Naive thymus-derived CD8-positive, alpha-beta T cell (primary cell): ENCODE measurements at regions of chr12 and their contacts with region 1.

Region 1: DNA sequence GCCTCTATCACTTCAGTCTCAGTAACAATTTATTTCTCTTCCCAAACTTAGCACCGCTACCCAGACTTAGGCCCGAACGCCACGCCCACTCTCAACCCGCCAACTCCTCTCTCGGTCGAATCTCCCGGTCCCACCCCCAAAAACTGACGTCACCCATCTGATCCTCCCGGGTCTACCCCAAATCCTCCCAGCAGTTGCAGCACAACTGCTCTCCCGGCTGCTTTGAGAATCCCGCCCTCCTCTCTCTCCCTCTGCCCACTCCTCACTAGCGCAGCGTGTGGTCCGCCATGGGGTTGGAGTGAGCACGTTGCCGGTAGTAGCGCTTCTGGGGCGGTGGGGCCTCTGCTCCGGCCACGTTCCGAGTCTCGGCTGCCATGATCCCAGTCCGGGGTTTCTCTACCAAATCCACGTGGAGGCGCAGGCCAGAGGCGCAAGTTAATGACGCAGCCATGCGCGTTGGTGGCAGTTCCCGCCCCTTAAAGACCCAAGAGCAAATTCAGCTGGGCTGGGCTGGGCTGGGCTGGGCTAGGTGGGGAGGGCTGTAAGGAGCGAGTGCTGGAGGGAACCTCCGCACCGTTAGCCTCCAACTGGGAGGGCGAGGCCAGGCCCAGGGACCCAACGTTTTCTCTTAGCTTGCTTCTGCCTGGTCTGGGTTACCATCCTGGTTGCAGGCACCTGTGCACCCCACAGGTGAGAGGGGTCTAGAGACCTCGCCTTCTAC is at the start of gene METTL1:
- DNase-seq: peak; percentile 74 to 93 (median 87)
- ATAC-seq: peak; percentile 88
- H3K4me3 Mint-ChIP-seq: peak within 1 kb of the TSS; percentile 94 to 99 (median 98)
- H3K27ac Mint-ChIP-seq: peak within 1 kb of the TSS; percentile 86 to 99 (median 98)
- H3K4me1 Mint-ChIP-seq: peaks cover 17 to 32% (median 22%) of the 10 kb centered on the region in 4 donors
- H3K27me3 Mint-ChIP-seq: peaks cover 0 to 1% (median 0%) of the 10 kb centered on the region in 5 donors
- polyA plus RNA-seq, gene METTL1: 12.9 to 21.7 (median 18.7) TPM

Region 2: GRCh38 chr12:57698414-57698813 is 73.5 kb before region 1 on chr12:
- POLR2A ChIA-PET with region 1: no interaction called
- DNase-seq: no peak
- ATAC-seq: no peak
- H3K4me3 Mint-ChIP-seq: no peak overlapping the region
- H3K27ac Mint-ChIP-seq: peak overlapping the region in 1 of 10 donors; percentile 7
- H3K4me1 Mint-ChIP-seq: peaks cover 10 to 34% (median 17%) of the 10 kb centered on the region in 4 donors
- H3K27me3 Mint-ChIP-seq: no peaks in the 10 kb centered on the region

Region 3: DNA sequence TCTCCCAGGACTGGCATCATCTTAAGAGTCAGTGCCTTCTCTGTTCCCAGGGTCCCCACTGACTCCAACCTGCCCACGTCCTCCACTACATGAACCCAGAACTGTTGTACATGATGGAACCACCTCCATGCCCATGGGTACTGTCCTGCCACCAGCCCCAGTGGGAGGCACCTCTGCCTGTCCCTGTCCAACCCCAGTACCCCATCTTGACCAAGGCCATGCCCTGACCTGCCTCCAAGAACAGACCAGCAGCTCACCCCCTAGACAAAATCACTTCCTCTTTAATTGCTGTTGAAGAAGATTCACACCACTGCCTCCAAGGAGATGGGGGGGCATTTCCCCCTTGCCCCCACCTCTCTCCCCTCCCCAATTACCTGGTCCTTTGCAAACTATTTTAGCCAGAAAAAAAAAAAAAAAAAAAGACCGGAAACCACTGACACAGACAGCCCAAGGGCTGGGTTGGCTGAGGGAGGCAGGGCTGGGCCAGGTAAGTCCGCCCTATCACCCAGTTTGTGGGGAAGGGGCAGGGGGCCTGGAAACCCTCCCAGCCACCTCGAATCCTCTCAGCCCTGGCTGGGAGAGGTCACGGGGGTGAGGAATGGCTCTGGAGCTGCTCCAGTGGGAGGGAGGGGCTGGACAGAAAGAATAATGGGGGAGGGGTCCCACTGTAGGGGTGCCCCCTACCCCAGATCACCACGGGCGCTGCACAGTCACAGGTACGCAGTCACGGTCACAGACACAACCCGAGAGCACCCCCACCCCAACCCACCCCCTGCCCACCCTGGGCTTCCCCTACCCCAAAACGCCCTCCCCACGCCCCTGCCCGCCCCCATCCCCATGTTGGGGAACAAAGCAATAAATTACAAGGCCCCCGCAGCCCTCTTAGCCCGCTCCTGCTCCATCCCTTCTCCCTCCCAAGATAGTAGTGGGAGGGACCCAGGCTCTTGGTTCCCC is 46.7 kb before region 1 on chr12:
- POLR2A ChIA-PET with region 1: no interaction called
- DNase-seq: no peak
- ATAC-seq: no peak
- H3K4me3 Mint-ChIP-seq: peak overlapping the region in 1 of 10 donors; percentile 20
- H3K27ac Mint-ChIP-seq: peak overlapping the region in 9 of 10 donors; percentile 11 to 91 (median 67)
- H3K4me1 Mint-ChIP-seq: peaks cover 16 to 44% (median 33%) of the 10 kb centered on the region in 4 donors
- H3K27me3 Mint-ChIP-seq: no peaks in the 10 kb centered on the region

Region 4: GRCh38 chr12:57735952-57736740 is 35.7 kb before region 1 on chr12:
- POLR2A ChIA-PET with region 1: no interaction called
- DNase-seq: no peak
- ATAC-seq: no peak
- H3K4me3 Mint-ChIP-seq: no peak overlapping the region
- H3K27ac Mint-ChIP-seq: peak overlapping the region; percentile 10 to 91 (median 80)
- H3K4me1 Mint-ChIP-seq: peaks cover 27 to 52% (median 36%) of the 10 kb centered on the region in 4 donors
- H3K27me3 Mint-ChIP-seq: no peaks in the 10 kb centered on the region

Region 5: GRCh38 chr12:57782608-57783465 is 11.0 kb after region 1 on chr12 and contains the start of gene TSFM:
- POLR2A ChIA-PET with region 1: interaction called, 20 read pairs
- DNase-seq: peak; percentile 89 to 98 (median 96)
- ATAC-seq: peak; percentile 87 to 92
- H3K4me3 Mint-ChIP-seq: peak within 1 kb of the TSS; percentile 99 to 100 (median 99)
- H3K27ac Mint-ChIP-seq: peak within 1 kb of the TSS; percentile 97 to 100 (median 99)
- H3K4me1 Mint-ChIP-seq: peaks cover 30 to 55% (median 48%) of the 10 kb centered on the region in 4 donors
- H3K27me3 Mint-ChIP-seq: peaks cover 0 to 4% (median 0%) of the 10 kb centered on the region in 5 donors
- polyA plus RNA-seq, gene TSFM: 25.5 to 31.0 (median 28.3) TPM

Region 6: DNA sequence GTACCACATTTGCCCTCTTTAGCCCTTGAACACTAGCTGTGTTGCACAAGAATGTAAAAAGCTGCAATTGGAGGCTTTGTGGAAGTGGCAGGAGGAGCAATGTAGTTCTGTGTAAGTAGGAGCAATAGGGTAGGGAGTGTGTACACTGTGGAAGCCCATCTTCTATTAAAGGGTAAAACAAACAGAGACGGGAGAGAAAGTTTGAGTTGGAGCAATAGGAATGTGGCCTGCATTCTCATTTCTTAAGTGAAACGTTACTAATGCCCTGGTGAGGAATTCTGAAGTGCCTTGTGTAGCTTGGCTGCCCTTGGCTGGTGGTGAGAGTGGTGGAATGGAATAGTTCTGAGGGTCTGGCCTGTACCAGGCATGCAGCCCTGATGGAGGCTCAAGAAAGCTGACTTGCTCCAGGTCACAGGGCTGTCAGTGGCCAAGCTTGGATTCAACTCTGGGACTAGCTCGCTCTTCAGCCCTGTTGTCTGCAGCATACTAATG is 130.7 kb after region 1 on chr12:
- POLR2A ChIA-PET with region 1: no interaction called
- DNase-seq: no peak
- ATAC-seq: no peak
- H3K4me3 Mint-ChIP-seq: no peak overlapping the region
- H3K27ac Mint-ChIP-seq: peak overlapping the region in 3 of 10 donors; percentile 4 to 73 (median 4)
- H3K4me1 Mint-ChIP-seq: peaks cover 17 to 29% (median 27%) of the 10 kb centered on the region in 4 donors
- H3K27me3 Mint-ChIP-seq: peaks cover 2 to 22% (median 7%) of the 10 kb centered on the region in 5 donors